ENCODE measurements at regions of chr4 and their contacts with region 1.

Region 1: GRCh38 chr4:150641612-150642011 is 59.7 kb downstream of the MAB21L2 start:
- DNase-seq: no peak
- H3K4me3 ChIP-seq: no peak overlapping the region
- H3K27ac ChIP-seq: no peak overlapping the region
- H3K4me1 ChIP-seq: no peaks in the 10 kb centered on the region
- H3K27me3 ChIP-seq: no peaks in the 10 kb centered on the region
- CTCF ChIP-seq: no peak

Region 2: DNA sequence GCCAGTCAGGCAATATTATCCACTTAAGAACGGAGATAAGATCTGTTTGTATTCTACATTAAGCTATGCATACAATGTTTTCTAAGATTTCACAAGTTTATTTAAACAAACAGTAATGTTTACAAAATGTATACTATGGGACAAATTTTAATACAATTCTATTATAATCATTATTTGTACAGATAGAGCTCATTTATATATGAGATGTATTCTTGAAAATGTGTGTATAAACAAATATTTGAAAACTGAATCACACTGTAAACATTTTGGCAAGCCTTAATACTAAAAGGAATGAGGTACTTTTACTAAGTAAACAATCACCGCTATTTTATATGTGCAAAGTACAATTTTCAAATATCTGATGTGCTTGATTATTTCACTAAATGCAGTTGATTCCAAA is 178.9 kb before region 1 on chr4:
- CTCF ChIA-PET with region 1: no interaction called
- dilution Hi-C with region 1: no loop called
- in situ Hi-C with region 1: no loop called
- intact Hi-C with region 1: no loop called
- DNase-seq: no peak
- H3K4me3 ChIP-seq: no peak overlapping the region
- H3K27ac ChIP-seq: no peak overlapping the region
- H3K4me1 ChIP-seq: no peaks in the 10 kb centered on the region
- H3K27me3 ChIP-seq: no peaks in the 10 kb centered on the region
- CTCF ChIP-seq: no peak

Region 3: DNA sequence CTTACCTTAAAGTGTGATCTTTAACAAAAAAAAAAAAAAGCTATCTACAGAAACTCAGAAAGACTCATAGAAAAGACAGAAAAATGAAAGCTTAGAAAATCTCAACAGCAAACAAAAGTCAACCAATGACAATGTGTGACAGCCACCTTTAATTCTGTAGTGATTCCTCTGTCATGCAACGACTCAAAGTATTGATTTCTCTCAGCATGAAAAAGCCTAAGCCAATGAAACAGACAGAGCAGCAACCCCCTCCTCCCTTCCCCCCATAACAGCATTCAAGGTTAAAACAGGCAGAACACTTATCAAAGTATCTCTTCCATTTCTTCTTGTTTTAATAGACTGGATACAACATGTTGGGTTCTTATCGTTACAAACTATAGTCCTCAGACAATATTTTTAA is 52.8 kb after region 1 on chr4:
- CTCF ChIA-PET with region 1: no interaction called
- dilution Hi-C with region 1: loop called (anchors 5 kb)
- in situ Hi-C with region 1: no loop called
- intact Hi-C with region 1: no loop called
- DNase-seq: no peak
- H3K4me3 ChIP-seq: no peak overlapping the region
- H3K27ac ChIP-seq: no peak overlapping the region
- H3K4me1 ChIP-seq: no peaks in the 10 kb centered on the region
- H3K27me3 ChIP-seq: no peaks in the 10 kb centered on the region
- CTCF ChIP-seq: no peak